A549 (cell line): ENCODE measurements at regions of chr11 and their contacts with region 1.

Region 1: GRCh38 chr11:128831174-128832120 is 35.6 kb downstream of the KCNJ1 start:
- DNase-seq: peak; percentile 25 to 67
- ATAC-seq: peak; percentile 75 to 97; a peak in 4 of 6 replicates
- H3K4me3 ChIP-seq: no peak overlapping the region
- H3K27ac ChIP-seq: no peak overlapping the region
- H3K4me1 ChIP-seq: 0 out of 3 replicates have a peak, but pooled peaks cover 4% of the 10 kb centered on the region
- CTCF ChIP-seq: peak; percentile 77
- EP300 ChIP-seq: no peak
- POLR2A ChIP-seq: no peak
- RAD21 ChIP-seq: peak; percentile 76 to 82

Region 2: GRCh38 chr11:128151338-128151737 is 680.1 kb before region 1 on chr11:
- CTCF ChIA-PET with region 1: interaction called, 97 read pairs
- POLR2A ChIA-PET with region 1: no interaction called
- DNase-seq: no peak
- ATAC-seq: no peak
- H3K4me3 ChIP-seq: no peak overlapping the region
- H3K27ac ChIP-seq: no peak overlapping the region
- H3K4me1 ChIP-seq: no peaks in the 10 kb centered on the region
- CTCF ChIP-seq: no peak
- EP300 ChIP-seq: no peak
- POLR2A ChIP-seq: no peak
- RAD21 ChIP-seq: no peak

Region 3: DNA sequence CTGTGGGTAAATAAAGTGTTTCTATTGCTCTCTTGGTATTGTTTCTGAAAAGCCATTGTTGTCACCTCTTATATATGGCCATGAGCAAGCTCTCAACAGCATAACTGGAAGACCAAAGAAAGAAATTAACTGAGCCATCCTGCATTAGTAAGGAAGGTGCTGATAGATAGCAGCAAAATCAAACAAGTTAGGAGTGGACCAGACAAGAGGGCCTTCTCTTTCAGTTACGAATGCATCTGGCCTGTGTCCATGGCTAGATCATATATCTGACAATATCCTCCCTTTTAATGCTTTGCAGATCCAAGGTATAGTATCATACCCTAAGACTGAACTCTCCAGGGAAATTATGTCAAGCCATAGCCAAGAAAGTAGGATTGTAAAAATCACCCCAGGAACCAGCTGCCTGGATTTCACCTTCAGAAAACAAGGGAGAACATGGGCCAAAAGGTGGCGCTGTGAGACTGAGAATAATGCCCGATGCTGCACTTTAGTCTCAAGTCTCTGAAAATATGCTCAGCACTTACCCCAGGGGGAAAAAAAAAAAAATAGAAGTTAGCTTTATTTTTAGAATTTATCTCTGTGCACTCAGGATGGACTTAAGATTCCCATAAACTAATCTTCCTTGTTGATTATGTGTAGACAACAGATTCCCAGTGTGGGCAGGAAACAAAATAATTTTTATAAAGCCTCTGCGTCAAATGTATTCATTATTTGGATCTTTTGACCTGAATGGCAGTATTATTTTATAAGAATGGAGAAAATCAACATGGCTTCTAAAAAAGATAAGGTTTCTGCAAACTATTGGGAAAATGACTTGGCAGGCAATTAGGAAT is 659.2 kb before region 1 on chr11:
- CTCF ChIA-PET with region 1: interaction called, 58 read pairs
- POLR2A ChIA-PET with region 1: no interaction called
- DNase-seq: peak; percentile 65 to 74
- ATAC-seq: peak; percentile 64 to 92; a peak in 5 of 6 replicates
- H3K4me3 ChIP-seq: no peak overlapping the region
- H3K27ac ChIP-seq: peak overlapping the region; percentile 6 to 52; a peak in 2 of 6 replicates
- H3K4me1 ChIP-seq: peaks cover 22% of the 10 kb centered on the region
- CTCF ChIP-seq: peak; percentile 81
- EP300 ChIP-seq: no peak
- POLR2A ChIP-seq: no peak
- RAD21 ChIP-seq: peak; percentile 91 to 93

Region 4: GRCh38 chr11:128809128-128809527 is 22.3 kb before region 1 on chr11:
- CTCF ChIA-PET with region 1: interaction called, 23 read pairs
- POLR2A ChIA-PET with region 1: no interaction called
- DNase-seq: no peak
- ATAC-seq: no peak
- H3K4me3 ChIP-seq: no peak overlapping the region
- H3K27ac ChIP-seq: no peak overlapping the region
- H3K4me1 ChIP-seq: no peaks in the 10 kb centered on the region
- CTCF ChIP-seq: no peak
- EP300 ChIP-seq: no peak
- POLR2A ChIP-seq: no peak
- RAD21 ChIP-seq: no peak

Region 5: GRCh38 chr11:128814856-128815705 is 16.4 kb before region 1 on chr11:
- CTCF ChIA-PET with region 1: interaction called, 23 read pairs
- POLR2A ChIA-PET with region 1: no interaction called
- DNase-seq: no peak
- ATAC-seq: no peak
- H3K4me3 ChIP-seq: no peak overlapping the region
- H3K27ac ChIP-seq: no peak overlapping the region
- H3K4me1 ChIP-seq: no peaks in the 10 kb centered on the region
- CTCF ChIP-seq: no peak
- EP300 ChIP-seq: no peak
- POLR2A ChIP-seq: no peak
- RAD21 ChIP-seq: no peak

Region 6: GRCh38 chr11:128845334-128845780 is 13.9 kb after region 1 on chr11:
- CTCF ChIA-PET with region 1: interaction called, 10 read pairs
- POLR2A ChIA-PET with region 1: no interaction called
- DNase-seq: no peak
- ATAC-seq: no peak
- H3K4me3 ChIP-seq: no peak overlapping the region
- H3K27ac ChIP-seq: no peak overlapping the region
- H3K4me1 ChIP-seq: no peaks in the 10 kb centered on the region
- CTCF ChIP-seq: no peak
- EP300 ChIP-seq: no peak
- POLR2A ChIP-seq: no peak
- RAD21 ChIP-seq: no peak

Region 7: DNA sequence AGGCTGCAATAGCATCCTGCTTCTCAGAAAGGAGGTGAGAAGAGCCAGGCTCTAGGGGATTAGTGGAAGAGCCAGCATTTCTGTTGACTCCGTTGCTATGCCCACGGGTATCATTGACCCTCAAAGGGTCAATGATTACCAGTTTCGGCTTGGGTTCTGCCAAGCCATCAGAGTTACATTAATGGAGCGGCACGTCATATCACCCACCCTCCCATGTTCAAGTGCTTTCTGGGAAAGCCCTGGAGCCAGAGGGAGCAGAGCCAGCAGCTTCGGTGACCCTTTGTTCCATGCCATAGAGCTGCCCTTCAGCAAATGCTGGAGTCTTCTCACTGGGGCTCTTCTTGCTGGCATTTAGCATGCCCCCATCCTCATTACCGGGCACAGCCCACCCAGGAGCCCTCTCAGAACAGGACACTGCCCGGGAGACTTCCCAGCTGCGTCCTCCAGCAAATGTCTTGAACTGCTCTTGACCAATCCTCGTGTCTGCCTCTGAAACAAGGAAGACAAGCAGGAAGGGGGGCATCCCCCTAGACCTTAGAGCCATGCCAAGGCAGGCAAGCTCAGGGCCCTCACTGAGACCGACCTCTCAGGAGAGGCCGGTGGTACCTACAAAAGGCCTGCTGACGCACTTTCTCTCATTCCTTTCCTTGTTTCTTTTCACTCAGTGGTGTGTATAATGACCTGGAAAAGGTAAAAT is 21.0 kb after region 1 on chr11:
- CTCF ChIA-PET with region 1: interaction called, 12 read pairs
- POLR2A ChIA-PET with region 1: no interaction called
- DNase-seq: no peak
- ATAC-seq: no peak
- H3K4me3 ChIP-seq: no peak overlapping the region
- H3K27ac ChIP-seq: no peak overlapping the region
- H3K4me1 ChIP-seq: no peaks in the 10 kb centered on the region
- CTCF ChIP-seq: no peak
- EP300 ChIP-seq: no peak
- POLR2A ChIP-seq: no peak
- RAD21 ChIP-seq: no peak

Region 8: DNA sequence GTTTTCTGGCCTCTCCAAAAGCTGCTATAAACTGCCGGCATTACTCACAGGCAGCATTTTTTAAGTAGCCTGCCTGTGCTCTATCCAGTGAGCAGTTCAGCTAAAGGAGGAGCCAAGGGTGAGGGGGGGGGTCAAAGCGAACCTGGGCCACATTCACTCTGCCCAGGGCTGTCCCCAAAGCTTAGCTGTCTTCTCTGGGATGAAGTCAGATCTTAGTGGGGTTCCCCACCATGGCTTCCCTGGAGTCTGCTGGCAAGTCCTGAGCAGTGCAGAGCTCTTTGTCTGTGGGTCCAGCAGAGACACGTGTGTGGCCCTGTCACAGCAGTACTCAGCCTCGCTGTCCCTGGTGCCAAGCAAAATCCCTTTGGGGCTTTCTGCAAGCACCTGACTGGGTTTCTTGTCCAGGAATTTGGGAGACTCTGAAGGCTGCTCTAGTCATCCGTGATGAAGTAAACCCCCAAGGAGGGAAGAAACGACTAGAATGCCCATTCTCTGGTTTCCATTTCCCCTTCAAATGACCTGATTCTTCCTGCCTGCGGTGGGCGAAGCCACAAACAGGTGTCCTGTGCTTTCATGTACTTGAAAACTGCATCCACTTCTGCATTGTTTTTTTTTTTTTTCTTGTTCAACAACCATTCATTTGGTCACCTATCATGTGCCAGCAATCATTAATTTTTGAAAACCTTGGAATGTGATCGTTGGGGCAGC is 62.3 kb after region 1 on chr11:
- CTCF ChIA-PET with region 1: no interaction called
- POLR2A ChIA-PET with region 1: no interaction called
- DNase-seq: no peak
- ATAC-seq: no peak
- H3K4me3 ChIP-seq: no peak overlapping the region
- H3K27ac ChIP-seq: no peak overlapping the region
- H3K4me1 ChIP-seq: no peaks in the 10 kb centered on the region
- CTCF ChIP-seq: no peak
- EP300 ChIP-seq: no peak
- POLR2A ChIP-seq: no peak
- RAD21 ChIP-seq: no peak